IMR-90 (cell line): ENCODE measurements at regions of chr6 and their contacts with region 1.

Region 1: DNA sequence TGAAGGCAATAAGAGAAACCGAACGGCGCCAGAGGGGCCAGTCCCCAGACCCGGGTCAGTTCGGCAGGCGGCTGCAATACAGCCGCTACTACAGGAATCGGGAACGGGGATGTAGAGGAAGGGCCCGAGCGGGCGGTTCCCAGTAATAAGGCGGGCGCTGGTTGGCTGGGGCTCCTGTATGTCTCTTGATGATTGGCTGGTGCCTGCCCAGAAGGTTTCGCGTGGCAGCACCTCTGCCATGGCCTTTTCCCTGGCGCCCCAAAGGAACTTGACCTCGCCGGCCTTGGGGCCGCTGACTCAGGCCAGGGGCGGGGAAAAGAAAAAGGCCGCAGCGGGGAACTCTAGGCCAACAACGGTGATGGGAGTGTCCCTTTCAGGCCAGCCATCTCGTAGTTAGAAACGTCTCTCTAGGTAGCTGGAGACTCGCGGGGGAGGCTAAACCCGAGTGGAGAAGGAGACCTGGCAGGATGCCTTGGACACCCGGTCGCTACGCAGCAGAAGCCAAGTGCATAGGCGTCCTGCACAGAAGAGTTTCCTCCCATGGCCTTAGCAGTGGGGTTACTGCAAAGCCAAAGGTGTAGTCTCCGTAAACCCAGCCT is at the start of gene IBTK:
- DNase-seq: peak; percentile 88
- ATAC-seq: peak; percentile 86
- H3K4me3 ChIP-seq: peak within 1 kb of the TSS; percentile 80
- H3K27ac ChIP-seq: peak within 1 kb of the TSS; percentile 91
- H3K4me1 ChIP-seq: peaks cover 10% of the 10 kb centered on the region
- H3K27me3 ChIP-seq: no peaks in the 10 kb centered on the region
- CTCF ChIP-seq: no peak
- POLR2A ChIP-seq: peak; percentile 88
- RAD21 ChIP-seq: no peak
- total RNA-seq, gene IBTK: 45.0 and 60.5 TPM in 2 replicates

Region 2: GRCh38 chr6:82616386-82617028 is 368.8 kb after region 1 on chr6:
- CTCF ChIA-PET with region 1: no interaction called
- POLR2A ChIA-PET with region 1: no interaction called
- dilution Hi-C with region 1: no loop called
- in situ Hi-C with region 1: no loop called
- intact Hi-C with region 1: loop called (anchors 2 kb)
- DNase-seq: peak; percentile 2
- ATAC-seq: no peak
- H3K4me3 ChIP-seq: no peak overlapping the region
- H3K27ac ChIP-seq: no peak overlapping the region
- H3K4me1 ChIP-seq: no peaks in the 10 kb centered on the region
- H3K27me3 ChIP-seq: no peaks in the 10 kb centered on the region
- CTCF ChIP-seq: peak; percentile 26; the same call in 1 of the 2 replicates
- POLR2A ChIP-seq: no peak
- RAD21 ChIP-seq: peak; percentile 37

Region 3: DNA sequence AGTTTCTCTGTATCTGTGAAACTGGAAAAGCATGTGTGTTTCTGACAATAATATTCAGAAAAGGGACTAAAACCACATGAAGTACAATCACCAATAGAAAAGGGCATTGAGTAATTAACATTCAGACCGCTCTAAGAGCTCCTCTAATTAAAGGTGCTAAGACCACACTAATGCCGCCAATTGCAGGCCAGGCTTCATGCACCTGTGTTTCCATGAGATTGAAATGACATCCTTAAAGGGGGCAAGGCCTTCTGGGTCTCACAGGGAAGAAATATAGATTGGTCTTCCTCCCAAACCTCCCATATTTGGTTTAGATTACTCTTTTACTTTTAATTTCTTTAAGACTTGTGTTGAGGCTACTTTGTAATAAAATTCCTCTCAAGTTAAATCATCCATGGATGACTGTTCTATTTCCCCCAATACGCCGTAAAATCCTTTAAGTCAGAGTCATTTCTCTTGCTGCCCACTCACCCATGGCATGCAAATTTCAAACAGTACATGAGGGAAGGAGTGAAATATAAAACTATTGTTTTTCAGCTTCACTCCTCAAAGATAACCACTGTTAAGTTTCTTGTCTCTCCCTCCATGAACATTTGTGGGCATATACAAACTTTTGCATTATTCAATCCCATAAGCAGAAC is 707.3 kb after region 1 on chr6:
- CTCF ChIA-PET with region 1: no interaction called
- POLR2A ChIA-PET with region 1: no interaction called
- dilution Hi-C with region 1: no loop called
- in situ Hi-C with region 1: no loop called
- intact Hi-C with region 1: loop called (anchors 5 kb)
- DNase-seq: peak; percentile 91
- ATAC-seq: peak; percentile 40
- H3K4me3 ChIP-seq: no peak overlapping the region
- H3K27ac ChIP-seq: peak overlapping the region; percentile 98
- H3K4me1 ChIP-seq: peaks cover 32% of the 10 kb centered on the region
- H3K27me3 ChIP-seq: no peaks in the 10 kb centered on the region
- CTCF ChIP-seq: no peak
- POLR2A ChIP-seq: no peak
- RAD21 ChIP-seq: no peak

Region 4: DNA sequence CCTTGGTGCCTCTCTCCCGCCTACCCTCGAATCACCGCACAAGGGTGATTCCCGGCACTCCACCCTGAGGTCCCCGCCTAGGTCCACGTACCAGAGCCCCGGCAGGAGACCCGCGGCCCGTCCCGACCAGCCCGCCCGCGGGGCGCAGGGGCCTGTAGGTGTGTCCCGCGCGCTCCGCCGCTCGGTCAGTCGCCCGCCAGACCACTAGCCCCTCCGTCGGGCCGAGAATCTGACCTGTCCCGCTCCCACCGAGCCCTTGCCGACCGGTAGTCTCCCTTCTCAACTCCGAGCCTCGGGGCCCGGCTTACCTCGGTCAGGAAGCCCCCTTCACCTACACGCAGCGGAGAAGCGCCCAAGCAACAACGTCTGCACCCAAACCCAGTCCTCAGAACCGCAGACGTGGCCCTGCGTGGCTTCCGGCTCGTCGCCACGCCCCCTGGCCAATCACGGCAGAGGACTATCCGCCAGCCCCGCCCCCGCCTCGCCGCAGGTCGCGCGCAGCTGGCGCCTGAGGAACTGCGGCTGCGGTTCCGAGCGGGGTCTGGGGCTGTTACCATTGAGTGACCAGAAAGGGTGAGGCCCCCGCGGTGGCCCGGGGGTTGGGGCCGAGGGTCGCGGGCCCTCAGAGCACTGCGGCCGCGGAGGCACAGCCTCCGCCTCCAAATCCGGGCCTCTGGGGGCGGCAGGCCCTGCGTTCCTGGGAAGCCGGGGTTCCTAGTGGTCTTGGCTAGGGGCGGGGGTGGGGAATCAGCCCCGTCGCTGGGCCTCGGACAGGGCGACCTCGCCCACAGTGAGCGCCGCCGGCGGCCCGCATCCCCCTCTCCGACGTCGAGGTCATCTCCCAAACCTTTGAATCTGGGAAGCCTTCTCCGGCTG is 945.4 kb after region 1 on chr6 and contains the starts of genes PGM3 and RWDD2A:
- CTCF ChIA-PET with region 1: no interaction called
- POLR2A ChIA-PET with region 1: no interaction called
- dilution Hi-C with region 1: no loop called
- in situ Hi-C with region 1: loop called (anchors 10 kb)
- intact Hi-C with region 1: no loop called
- DNase-seq: peak; percentile 84
- ATAC-seq: peak; percentile 97
- H3K4me3 ChIP-seq: peak within 1 kb of the TSS; percentile 91
- H3K27ac ChIP-seq: peak within 1 kb of the TSS; percentile 97
- H3K4me1 ChIP-seq: peaks cover 12% of the 10 kb centered on the region
- H3K27me3 ChIP-seq: no peaks in the 10 kb centered on the region
- CTCF ChIP-seq: no peak
- POLR2A ChIP-seq: peak; percentile 97
- RAD21 ChIP-seq: no peak
- total RNA-seq, gene PGM3: 223 and 336 TPM in 2 replicates
- total RNA-seq, gene RWDD2A: 3.9 and 4.7 TPM in 2 replicates

Region 5: GRCh38 chr6:83215131-83216047 is 967.7 kb after region 1 on chr6:
- CTCF ChIA-PET with region 1: no interaction called
- POLR2A ChIA-PET with region 1: no interaction called
- dilution Hi-C with region 1: no loop called
- in situ Hi-C with region 1: no loop called
- intact Hi-C with region 1: loop called (anchors 10 kb)
- DNase-seq: peak; percentile 80
- ATAC-seq: peak; percentile 91
- H3K4me3 ChIP-seq: no peak overlapping the region
- H3K27ac ChIP-seq: peak overlapping the region; percentile 62; the same call in 1 of the 2 replicates
- H3K4me1 ChIP-seq: peaks cover 4% of the 10 kb centered on the region
- H3K27me3 ChIP-seq: no peaks in the 10 kb centered on the region
- CTCF ChIP-seq: peak; percentile 92
- POLR2A ChIP-seq: no peak
- RAD21 ChIP-seq: peak; percentile 84